ENCODE measurements at regions of chr20 and their contacts with region 1.

Region 1: DNA sequence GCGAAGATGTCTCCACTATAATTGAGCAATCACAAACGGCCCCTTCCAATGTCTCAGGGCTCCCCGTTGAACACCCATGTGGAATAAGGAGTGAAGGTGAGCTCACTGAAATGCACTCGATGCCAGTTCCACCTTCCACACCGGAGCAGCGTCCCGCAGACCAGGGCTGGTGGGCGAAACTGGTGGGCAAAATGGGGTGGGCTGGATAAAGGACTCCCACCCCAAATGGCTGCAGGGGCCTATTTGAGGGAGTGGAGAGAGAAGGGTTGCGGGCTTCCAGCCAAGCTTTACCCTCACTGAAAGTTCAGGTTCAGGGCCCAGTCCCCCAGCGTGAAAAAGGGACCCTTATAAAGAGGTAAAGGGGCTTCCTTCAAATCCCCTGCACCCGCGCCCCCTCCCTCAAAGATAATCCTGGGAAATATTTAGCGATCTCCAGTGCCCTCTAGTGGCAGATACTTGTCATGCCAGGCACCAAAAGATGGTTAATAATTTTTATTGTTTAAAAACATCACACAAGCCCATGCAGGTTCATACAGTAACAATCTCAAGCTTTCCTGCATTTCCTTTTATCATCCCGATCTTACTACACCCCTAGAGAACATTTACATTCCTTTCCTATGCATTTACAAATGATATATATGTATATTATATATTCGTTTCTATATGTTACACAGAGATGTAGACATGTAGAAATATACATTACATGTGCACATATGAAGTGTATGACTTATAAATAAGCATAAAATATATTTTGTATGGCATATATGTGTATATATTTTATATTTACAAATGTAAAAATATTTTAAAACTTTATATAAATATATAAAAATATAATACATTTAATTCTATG is 58.2 kb upstream of the NKX2-2 start:
- DNase-seq: peak; percentile 18
- H3K4me3 ChIP-seq: no peak overlapping the region
- H3K27ac ChIP-seq: no peak overlapping the region
- H3K4me1 ChIP-seq: no peaks in the 10 kb centered on the region
- H3K27me3 ChIP-seq: no peaks in the 10 kb centered on the region
- CTCF ChIP-seq: peak; percentile 63 to 85
- POLR2A ChIP-seq: no peak

Region 2: DNA sequence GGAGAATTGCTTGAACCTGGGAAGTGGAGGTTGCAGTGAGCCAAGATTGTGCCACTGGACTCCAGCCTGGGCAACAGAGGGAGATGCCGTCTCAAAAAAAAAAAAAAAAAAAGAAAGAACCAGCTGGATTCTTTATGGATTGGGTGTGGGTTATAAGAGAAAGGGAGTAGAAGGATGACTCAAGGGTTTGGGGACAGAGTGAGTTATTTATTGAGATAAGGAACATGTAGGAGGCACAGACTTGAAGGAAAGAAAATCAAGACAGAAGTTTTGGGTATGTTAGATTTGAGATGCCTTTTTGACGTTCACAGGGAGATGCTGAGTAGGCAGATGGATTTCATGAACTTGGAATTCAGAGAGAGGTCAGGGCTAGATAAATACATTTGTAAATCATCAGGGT is 398.6 kb before region 1 on chr20:
- CTCF ChIA-PET with region 1: no interaction called
- POLR2A ChIA-PET with region 1: no interaction called
- dilution Hi-C with region 1: no loop called
- intact Hi-C with region 1: no loop called
- DNase-seq: no peak
- H3K4me3 ChIP-seq: no peak overlapping the region
- H3K27ac ChIP-seq: no peak overlapping the region
- H3K4me1 ChIP-seq: no peaks in the 10 kb centered on the region
- H3K27me3 ChIP-seq: no peaks in the 10 kb centered on the region
- CTCF ChIP-seq: no peak
- POLR2A ChIP-seq: no peak

Region 3: DNA sequence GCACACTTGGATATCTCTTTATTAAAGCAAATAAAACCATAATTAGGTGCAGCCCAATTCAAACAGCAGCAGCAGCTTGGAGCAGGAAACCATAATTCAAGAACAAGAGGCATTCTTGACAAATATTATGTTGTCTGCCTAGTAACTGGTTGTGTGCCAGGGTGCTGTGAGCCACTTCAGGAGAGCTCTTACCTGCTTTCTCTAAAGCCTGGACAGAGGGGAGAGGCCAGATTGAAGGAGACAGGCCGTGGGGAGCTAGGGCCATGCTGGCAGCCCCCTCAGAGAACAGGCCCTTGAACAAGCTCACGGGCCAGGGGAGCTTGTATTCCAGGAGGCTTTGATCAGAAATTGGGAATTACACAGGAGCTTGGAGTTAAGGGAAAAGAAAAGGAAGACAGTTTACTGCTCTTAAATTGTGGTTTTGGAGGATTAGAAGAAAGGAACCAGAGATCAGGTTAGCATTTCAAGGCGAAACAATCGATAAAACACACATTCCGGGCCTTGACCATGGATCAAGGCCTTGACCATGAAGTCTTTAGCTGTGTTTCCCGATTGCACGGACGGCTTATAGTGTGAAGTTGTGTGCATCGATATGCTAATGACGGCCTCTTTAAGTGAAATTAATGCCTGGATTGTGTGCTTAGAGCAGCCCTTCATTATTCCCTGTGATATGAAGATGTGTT is 11.6 kb after region 1 on chr20:
- CTCF ChIA-PET with region 1: interaction called, 12 read pairs
- POLR2A ChIA-PET with region 1: no interaction called
- dilution Hi-C with region 1: no loop called
- intact Hi-C with region 1: no loop called
- DNase-seq: no peak
- H3K4me3 ChIP-seq: no peak overlapping the region
- H3K27ac ChIP-seq: no peak overlapping the region
- H3K4me1 ChIP-seq: no peaks in the 10 kb centered on the region
- H3K27me3 ChIP-seq: no peaks in the 10 kb centered on the region
- CTCF ChIP-seq: no peak
- POLR2A ChIP-seq: no peak